ENCODE measurements at regions of chr1 and their contacts with region 1.

Region 1: DNA sequence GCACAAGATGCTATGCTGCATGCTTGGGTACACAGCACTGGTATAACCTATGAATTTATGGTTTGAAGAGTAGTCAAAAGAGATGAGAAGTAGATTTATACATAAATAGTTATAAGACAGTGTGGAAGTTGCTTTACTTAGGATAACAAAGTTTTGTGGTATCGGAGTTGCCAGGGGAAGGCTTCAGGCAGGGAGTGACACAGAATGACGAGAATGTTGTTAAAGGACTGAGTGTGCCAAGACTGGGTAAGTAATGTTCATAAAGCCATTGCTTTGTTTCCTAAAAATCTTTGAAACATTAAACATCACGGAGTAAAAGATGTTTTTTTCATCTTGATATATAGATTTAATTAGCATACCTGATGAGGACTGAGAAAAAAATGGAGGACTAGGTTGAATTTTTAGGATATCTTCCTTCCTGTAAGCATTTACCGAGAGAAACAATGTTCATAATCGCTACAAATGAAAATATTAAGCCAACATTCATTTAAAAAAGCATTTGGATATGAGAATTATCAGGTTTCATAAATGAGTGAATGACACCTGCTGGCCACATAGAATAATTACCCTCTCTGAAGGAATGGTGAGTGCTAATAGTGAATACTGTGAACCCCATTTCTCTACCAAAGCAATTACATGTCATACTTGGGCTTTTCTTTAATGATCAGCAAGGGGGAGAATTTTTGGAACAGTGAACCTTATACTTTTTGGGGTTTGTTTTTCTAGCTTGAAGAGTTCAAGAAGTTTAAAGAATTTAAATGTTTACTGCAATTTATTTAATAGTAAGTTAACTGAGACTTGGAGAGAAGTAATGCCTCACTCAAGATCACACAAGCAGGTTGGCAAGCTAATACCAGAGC is 28.4 kb downstream of the EXTL2 start:
- DNase-seq: peak; percentile 10
- H3K4me3 ChIP-seq: no peak overlapping the region
- H3K27ac ChIP-seq: peak overlapping the region; percentile 16 to 43; a peak in 2 of 4 replicates
- H3K4me1 ChIP-seq: peaks cover 0 to 4% of the 10 kb centered on the region in 2 experiments; a peak in 2 of 4 replicates
- H3K27me3 ChIP-seq: no peaks in the 10 kb centered on the region
- CTCF ChIP-seq: peak; percentile 79
- EP300 ChIP-seq: no peak
- RAD21 ChIP-seq: peak; percentile 64

Region 2: DNA sequence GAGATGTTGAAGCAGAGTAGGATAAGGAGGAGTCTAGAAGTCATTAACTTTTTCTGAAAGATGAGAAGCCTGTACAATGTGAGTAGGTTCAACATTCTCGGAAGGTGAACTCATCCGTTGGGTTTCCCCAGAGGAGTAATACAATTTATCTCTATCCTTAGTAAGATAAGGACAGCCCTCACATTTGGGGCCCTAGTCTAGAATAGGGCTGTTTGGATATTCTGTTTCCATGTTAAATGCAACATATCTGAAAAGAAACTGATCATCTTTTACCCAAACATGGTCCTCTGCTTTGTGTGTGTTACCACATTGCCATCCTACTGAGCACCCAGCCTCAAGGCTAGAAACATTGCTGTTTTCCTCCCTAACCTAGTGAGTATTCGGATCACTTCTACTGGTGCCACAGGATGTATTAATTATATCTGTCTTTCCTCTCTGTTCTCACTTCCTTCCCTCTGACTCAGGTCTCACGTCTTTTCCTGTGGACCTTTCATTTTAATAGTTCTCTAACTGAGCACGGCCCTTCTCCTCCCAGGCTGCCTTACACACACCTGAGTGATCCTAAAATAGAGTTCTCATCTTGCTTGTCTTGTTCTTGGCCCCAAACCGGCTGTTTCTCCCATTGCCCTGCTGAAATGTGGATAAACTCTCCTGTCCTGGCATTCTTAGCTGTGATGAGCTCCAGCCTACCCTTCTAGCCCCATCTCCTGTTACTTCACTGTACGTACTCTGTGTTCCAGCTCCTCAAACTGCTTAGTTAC is 422.3 kb before region 1 on chr1:
- CTCF ChIA-PET with region 1: interaction called, 12 read pairs
- POLR2A ChIA-PET with region 1: no interaction called
- DNase-seq: no peak
- H3K4me3 ChIP-seq: no peak overlapping the region
- H3K27ac ChIP-seq: no peak overlapping the region
- H3K4me1 ChIP-seq: peaks cover 3 to 6% of the 10 kb centered on the region in 2 experiments; a peak in 3 of 4 replicates
- H3K27me3 ChIP-seq: no peaks in the 10 kb centered on the region
- CTCF ChIP-seq: no peak
- EP300 ChIP-seq: no peak
- RAD21 ChIP-seq: no peak

Region 3: DNA sequence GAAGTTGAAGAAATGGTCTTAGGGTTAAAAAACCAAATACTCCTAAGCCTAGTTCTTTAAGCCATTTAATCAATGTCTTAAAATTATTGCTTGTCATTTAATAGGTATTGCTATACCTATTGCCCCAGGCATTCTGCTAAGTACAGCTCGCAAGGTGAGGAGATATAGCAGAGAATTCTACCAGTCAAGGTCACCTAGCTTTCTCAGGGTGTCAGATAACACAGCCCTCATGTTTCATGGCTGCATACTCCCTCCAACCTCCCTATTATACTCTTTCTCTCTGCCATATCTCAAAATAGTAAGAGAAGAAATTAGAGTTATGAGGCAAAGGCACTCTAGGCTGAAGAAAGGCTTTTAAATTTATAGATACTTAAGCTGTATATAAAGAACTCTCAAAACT is 396.7 kb before region 1 on chr1:
- CTCF ChIA-PET with region 1: interaction called, 263 read pairs
- POLR2A ChIA-PET with region 1: no interaction called
- DNase-seq: no peak
- H3K4me3 ChIP-seq: no peak overlapping the region
- H3K27ac ChIP-seq: no peak overlapping the region
- H3K4me1 ChIP-seq: no peaks in the 10 kb centered on the region; a peak in 1 of 4 replicates
- H3K27me3 ChIP-seq: no peaks in the 10 kb centered on the region
- CTCF ChIP-seq: no peak
- EP300 ChIP-seq: no peak
- RAD21 ChIP-seq: no peak

Region 4: DNA sequence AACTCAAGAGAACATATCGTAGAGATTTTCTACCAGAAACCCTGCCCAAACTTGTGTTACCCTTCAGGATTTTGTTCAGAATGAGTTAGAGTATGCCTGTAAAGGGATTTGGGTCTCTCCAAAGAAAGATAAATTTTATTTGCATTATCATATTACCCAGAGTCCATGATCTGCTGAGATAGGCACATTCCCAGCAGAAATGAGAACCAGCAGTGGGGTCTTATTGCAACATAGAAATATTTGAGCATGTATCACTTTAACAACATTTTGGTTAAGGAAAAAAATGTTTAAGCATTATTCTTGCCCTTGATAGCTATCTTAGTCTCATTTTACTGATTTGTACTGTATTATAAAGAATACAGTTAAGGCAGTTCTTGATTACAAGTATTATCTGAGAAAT is 136.1 kb before region 1 on chr1:
- CTCF ChIA-PET with region 1: no interaction called
- POLR2A ChIA-PET with region 1: no interaction called
- DNase-seq: no peak
- H3K4me3 ChIP-seq: no peak overlapping the region
- H3K27ac ChIP-seq: no peak overlapping the region
- H3K4me1 ChIP-seq: peaks cover 0 to under 1% of the 10 kb centered on the region in 2 experiments; a peak in 2 of 4 replicates
- H3K27me3 ChIP-seq: no peaks in the 10 kb centered on the region
- CTCF ChIP-seq: no peak
- EP300 ChIP-seq: no peak
- RAD21 ChIP-seq: no peak

Region 5: DNA sequence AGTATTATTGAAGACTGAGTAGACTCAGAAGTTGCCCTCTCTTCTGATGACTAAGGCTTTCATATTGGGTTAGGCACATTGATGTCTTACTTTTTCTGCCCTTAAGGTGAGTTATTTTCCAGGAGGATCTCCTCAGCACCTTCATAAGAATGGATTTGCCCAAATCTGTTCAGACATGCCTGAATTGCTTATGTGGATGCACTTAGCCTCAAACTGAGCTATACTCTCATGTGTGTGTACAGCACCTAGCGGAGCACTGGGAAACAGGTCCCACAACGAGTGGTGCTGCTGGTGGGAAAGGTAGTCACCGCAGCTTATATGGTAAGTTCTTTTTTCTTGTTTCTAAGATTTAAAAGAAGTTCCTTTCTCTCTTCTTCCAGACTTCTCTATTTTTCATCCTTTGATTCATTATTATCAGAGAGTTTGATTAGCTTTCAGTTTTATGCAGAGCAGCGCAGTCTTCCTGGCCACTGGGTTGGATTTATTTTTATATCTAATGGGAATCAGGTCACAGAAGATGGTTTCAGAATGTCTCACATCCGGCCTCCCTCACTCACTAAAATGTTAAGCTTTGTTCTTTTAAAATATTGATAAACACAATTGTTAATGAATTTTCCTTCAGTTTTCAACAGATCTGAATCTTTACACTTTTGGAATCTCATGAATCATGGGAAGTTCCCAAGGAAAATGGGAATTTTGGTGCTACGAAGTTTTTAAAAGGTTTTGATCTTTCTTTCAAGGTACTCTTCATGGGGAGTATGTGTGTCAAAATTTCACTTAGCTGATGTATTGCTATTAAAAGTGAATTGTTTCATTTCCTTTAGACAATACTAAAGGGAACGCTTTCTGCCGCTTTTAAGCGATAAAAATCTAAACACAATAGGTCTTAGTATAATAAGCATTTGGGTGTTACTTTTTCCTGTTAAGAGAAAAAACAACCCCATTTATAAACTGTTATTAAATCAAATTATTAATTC is 30.1 kb before region 1 on chr1:
- CTCF ChIA-PET with region 1: interaction called, 10 read pairs
- POLR2A ChIA-PET with region 1: no interaction called
- DNase-seq: no peak
- H3K4me3 ChIP-seq: no peak overlapping the region
- H3K27ac ChIP-seq: peak overlapping the region in 1 of 2 experiments; percentile 47; a peak in 2 of 4 replicates
- H3K4me1 ChIP-seq: peaks cover 0 to 14% of the 10 kb centered on the region in 2 experiments; a peak in 1 of 4 replicates
- H3K27me3 ChIP-seq: no peaks in the 10 kb centered on the region
- CTCF ChIP-seq: no peak
- EP300 ChIP-seq: no peak
- RAD21 ChIP-seq: no peak

Region 6: DNA sequence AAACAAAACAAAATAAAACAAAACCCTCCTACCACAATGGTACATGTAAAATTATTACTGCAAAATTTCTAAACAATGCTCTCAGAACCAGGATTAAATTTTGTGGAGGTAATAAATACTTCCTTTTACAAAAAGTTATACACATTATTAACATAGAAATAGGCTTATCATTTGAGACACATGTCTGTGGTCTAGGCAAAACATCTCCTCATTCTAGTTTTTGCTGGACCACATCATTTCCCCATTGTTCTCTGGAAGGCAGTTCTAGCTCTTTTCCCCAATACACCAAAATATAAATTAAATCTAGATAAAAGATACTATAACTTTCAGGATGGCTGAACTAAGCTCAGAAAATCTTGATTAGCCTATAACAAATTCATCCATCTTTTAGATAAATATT is 10.0 kb after region 1 on chr1:
- CTCF ChIA-PET with region 1: interaction called, 41 read pairs
- POLR2A ChIA-PET with region 1: no interaction called
- DNase-seq: no peak
- H3K4me3 ChIP-seq: no peak overlapping the region
- H3K27ac ChIP-seq: no peak overlapping the region
- H3K4me1 ChIP-seq: no peaks in the 10 kb centered on the region
- H3K27me3 ChIP-seq: no peaks in the 10 kb centered on the region
- CTCF ChIP-seq: no peak
- EP300 ChIP-seq: no peak
- RAD21 ChIP-seq: no peak

Region 7: GRCh38 chr1:100969327-100969726 is 103.1 kb after region 1 on chr1:
- CTCF ChIA-PET with region 1: no interaction called
- POLR2A ChIA-PET with region 1: no interaction called
- DNase-seq: no peak
- H3K4me3 ChIP-seq: no peak overlapping the region
- H3K27ac ChIP-seq: no peak overlapping the region
- H3K4me1 ChIP-seq: no peaks in the 10 kb centered on the region; a peak in 1 of 4 replicates
- H3K27me3 ChIP-seq: no peaks in the 10 kb centered on the region
- CTCF ChIP-seq: no peak
- EP300 ChIP-seq: no peak
- RAD21 ChIP-seq: no peak

Measured in SK-N-SH (cell line).